ENCODE measurements at regions of chr13 and their contacts with region 1.

Region 1: GRCh38 chr13:73765651-73766384 is 368.4 kb downstream of the KLF12 start:
- DNase-seq: peak; percentile 29 to 91 (median 85)
- ATAC-seq: peak; percentile 92
- H3K4me3 ChIP-seq: peak overlapping the region; percentile 52
- H3K4me3 Mint-ChIP-seq: peak overlapping the region; percentile 77 to 87 (median 85)
- H3K27ac ChIP-seq: peak overlapping the region; percentile 77
- H3K27ac Mint-ChIP-seq: peak overlapping the region; percentile 90 to 100 (median 98)
- H3K4me1 ChIP-seq: peaks cover 37 to 52% of the 10 kb centered on the region in 2 donors
- H3K4me1 Mint-ChIP-seq: peaks cover 37 to 92% (median 89%) of the 10 kb centered on the region in 7 donors
- H3K27me3 ChIP-seq: no peaks in the 10 kb centered on the region
- H3K27me3 Mint-ChIP-seq: no peaks in the 10 kb centered on the region

Region 2: GRCh38 chr13:73074036-73074435 is 691.8 kb before region 1 on chr13:
- CTCF ChIA-PET with region 1: no interaction called
- POLR2A ChIA-PET with region 1: no interaction called
- intact Hi-C with region 1: no loop called
- DNase-seq: no peak
- ATAC-seq: peak; percentile 16
- H3K4me3 ChIP-seq: no peak overlapping the region
- H3K4me3 Mint-ChIP-seq: no peak overlapping the region
- H3K27ac ChIP-seq: no peak overlapping the region
- H3K27ac Mint-ChIP-seq: no peak overlapping the region
- H3K4me1 ChIP-seq: no peaks in the 10 kb centered on the region
- H3K4me1 Mint-ChIP-seq: peaks cover 0 to 15% (median 5%) of the 10 kb centered on the region in 7 donors
- H3K27me3 ChIP-seq: no peaks in the 10 kb centered on the region
- H3K27me3 Mint-ChIP-seq: peaks cover 0 to 3% (median 0%) of the 10 kb centered on the region in 5 donors

Region 3: GRCh38 chr13:73715114-73715910 is 50.5 kb before region 1 on chr13:
- CTCF ChIA-PET with region 1: interaction called, 3 read pairs
- POLR2A ChIA-PET with region 1: interaction called, 5 read pairs
- intact Hi-C with region 1: loop called (anchors 1 to 2 kb)
- DNase-seq: peak in 8 of 9 donors; percentile 53 to 85 (median 77)
- ATAC-seq: peak; percentile 90
- H3K4me3 ChIP-seq: peak overlapping the region; percentile 7
- H3K4me3 Mint-ChIP-seq: peak overlapping the region; percentile 72 to 86 (median 78)
- H3K27ac ChIP-seq: peak overlapping the region; percentile 67
- H3K27ac Mint-ChIP-seq: peak overlapping the region; percentile 87 to 99 (median 97)
- H3K4me1 ChIP-seq: peaks cover 34 to 43% of the 10 kb centered on the region in 2 donors
- H3K4me1 Mint-ChIP-seq: peaks cover 25 to 80% (median 58%) of the 10 kb centered on the region in 7 donors
- H3K27me3 ChIP-seq: no peaks in the 10 kb centered on the region
- H3K27me3 Mint-ChIP-seq: no peaks in the 10 kb centered on the region

Region 4: DNA sequence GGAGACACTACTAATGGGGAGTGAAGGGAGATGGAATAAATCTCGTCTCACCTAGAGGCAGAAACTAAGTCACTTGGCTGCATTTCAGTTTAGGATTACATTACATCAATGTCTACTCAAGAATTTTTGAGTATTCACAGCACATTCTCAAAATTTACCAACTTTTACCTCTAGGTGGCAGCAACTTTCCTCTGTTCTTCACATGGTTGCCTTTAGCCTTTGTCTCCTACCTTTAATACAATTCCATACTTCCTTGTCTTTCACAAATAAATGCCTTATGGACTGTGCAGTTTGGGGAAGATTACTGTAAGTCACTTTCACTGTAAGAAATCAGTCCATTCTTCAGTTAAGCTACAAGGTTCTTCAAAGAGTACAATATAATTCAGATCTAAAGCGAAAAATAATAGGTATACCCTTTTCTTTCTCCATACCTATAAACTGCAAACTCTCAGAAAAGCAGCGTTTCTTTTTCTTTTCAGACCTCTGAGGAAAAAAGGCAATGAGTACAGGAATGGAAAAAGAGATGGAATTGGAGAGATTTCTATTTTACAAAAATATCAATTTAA is 11.0 kb before region 1 on chr13:
- CTCF ChIA-PET with region 1: interaction called, 41 read pairs
- POLR2A ChIA-PET with region 1: interaction called, 43 read pairs
- intact Hi-C with region 1: loop called (anchors 1 kb)
- DNase-seq: peak in 7 of 9 donors; percentile 32 to 69 (median 59)
- ATAC-seq: peak; percentile 67
- H3K4me3 ChIP-seq: no peak overlapping the region
- H3K4me3 Mint-ChIP-seq: peak overlapping the region in 1 of 10 donors; percentile 5
- H3K27ac ChIP-seq: no peak overlapping the region
- H3K27ac Mint-ChIP-seq: peak overlapping the region; percentile 11 to 96 (median 79)
- H3K4me1 ChIP-seq: peaks cover 0 to 19% of the 10 kb centered on the region in 2 donors
- H3K4me1 Mint-ChIP-seq: peaks cover 13 to 76% (median 57%) of the 10 kb centered on the region in 7 donors
- H3K27me3 ChIP-seq: no peaks in the 10 kb centered on the region
- H3K27me3 Mint-ChIP-seq: no peaks in the 10 kb centered on the region

Region 5: GRCh38 chr13:73803997-73804396 is 38.2 kb after region 1 on chr13:
- CTCF ChIA-PET with region 1: no interaction called
- POLR2A ChIA-PET with region 1: interaction called, 8 read pairs
- intact Hi-C with region 1: loop called in 1 of 2 experiments (anchors 5 kb)
- DNase-seq: no peak
- ATAC-seq: no peak
- H3K4me3 ChIP-seq: no peak overlapping the region
- H3K4me3 Mint-ChIP-seq: no peak overlapping the region
- H3K27ac ChIP-seq: no peak overlapping the region
- H3K27ac Mint-ChIP-seq: peak overlapping the region in 5 of 9 donors; percentile 1 to 58 (median 44)
- H3K4me1 ChIP-seq: no peaks in the 10 kb centered on the region
- H3K4me1 Mint-ChIP-seq: peaks cover 0 to 52% (median 29%) of the 10 kb centered on the region in 7 donors
- H3K27me3 ChIP-seq: no peaks in the 10 kb centered on the region
- H3K27me3 Mint-ChIP-seq: no peaks in the 10 kb centered on the region

Region 6: DNA sequence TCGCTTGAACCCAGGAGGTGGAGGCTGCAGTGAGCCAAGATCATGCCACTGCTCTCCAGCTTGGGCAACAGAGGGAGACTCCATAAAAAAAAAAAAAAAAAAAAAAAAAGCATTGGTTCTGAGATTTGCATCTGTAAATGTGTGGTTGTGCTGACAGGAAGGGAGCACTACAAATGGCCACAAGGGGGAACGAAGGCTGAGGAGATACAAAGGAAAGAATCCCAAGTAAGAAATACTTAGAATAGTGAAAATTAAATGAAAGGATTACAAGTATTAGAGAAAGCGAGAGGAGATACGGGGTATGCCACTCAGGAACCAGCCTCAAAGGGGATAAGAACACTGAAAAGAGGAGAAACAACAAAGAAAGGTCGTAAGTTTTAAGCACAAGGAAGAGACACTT is 83.5 kb after region 1 on chr13:
- CTCF ChIA-PET with region 1: interaction called, 13 read pairs
- POLR2A ChIA-PET with region 1: interaction called, 5 read pairs
- intact Hi-C with region 1: no loop called
- DNase-seq: peak in 4 of 9 donors; percentile 8 to 30 (median 21)
- ATAC-seq: no peak
- H3K4me3 ChIP-seq: no peak overlapping the region
- H3K4me3 Mint-ChIP-seq: peak overlapping the region in 4 of 10 donors; percentile 6 to 65 (median 47)
- H3K27ac ChIP-seq: no peak overlapping the region
- H3K27ac Mint-ChIP-seq: peak overlapping the region in 6 of 9 donors; percentile 3 to 86 (median 64)
- H3K4me1 ChIP-seq: peaks cover 10 to 16% of the 10 kb centered on the region in 2 donors
- H3K4me1 Mint-ChIP-seq: peaks cover 6 to 64% (median 51%) of the 10 kb centered on the region in 7 donors
- H3K27me3 ChIP-seq: no peaks in the 10 kb centered on the region
- H3K27me3 Mint-ChIP-seq: no peaks in the 10 kb centered on the region

Region 7: DNA sequence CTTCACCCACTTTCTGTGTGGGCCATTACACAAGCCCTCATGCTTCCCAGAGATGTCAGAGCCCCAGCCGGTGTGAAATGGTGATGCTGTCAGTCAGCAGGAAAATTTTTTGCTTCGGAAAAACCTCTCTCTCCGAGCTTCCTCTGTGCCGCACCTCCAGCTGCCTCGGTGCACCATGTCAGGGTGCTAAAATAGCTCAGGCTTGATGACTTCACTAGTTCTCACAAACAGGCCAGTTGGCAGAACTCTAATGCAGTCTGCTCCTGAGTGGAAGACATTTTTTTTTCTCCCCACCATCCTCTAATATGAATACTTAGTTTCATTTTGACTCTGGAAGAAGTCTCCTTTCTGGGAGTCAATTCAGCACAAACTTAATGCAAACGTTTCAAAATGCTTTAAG is 297.1 kb after region 1 on chr13:
- CTCF ChIA-PET with region 1: no interaction called
- POLR2A ChIA-PET with region 1: no interaction called
- intact Hi-C with region 1: loop called in 1 of 2 experiments (anchors 5 kb)
- DNase-seq: peak in 1 of 9 donors; percentile 24
- ATAC-seq: peak; percentile 5
- H3K4me3 ChIP-seq: no peak overlapping the region
- H3K4me3 Mint-ChIP-seq: peak overlapping the region; percentile 26 to 80 (median 64)
- H3K27ac ChIP-seq: no peak overlapping the region
- H3K27ac Mint-ChIP-seq: peak overlapping the region; percentile 58 to 86 (median 81)
- H3K4me1 ChIP-seq: peaks cover 52 to 73% of the 10 kb centered on the region in 2 donors
- H3K4me1 Mint-ChIP-seq: peaks cover 50 to 95% (median 91%) of the 10 kb centered on the region in 7 donors
- H3K27me3 ChIP-seq: no peaks in the 10 kb centered on the region
- H3K27me3 Mint-ChIP-seq: no peaks in the 10 kb centered on the region

Region 8: GRCh38 chr13:74230984-74231501 is 465.2 kb after region 1 on chr13:
- CTCF ChIA-PET with region 1: no interaction called
- POLR2A ChIA-PET with region 1: interaction called, 4 read pairs
- intact Hi-C with region 1: loop called in 1 of 2 experiments (anchors 5 kb)
- DNase-seq: peak in 7 of 9 donors; percentile 37 to 78 (median 69)
- ATAC-seq: peak; percentile 85
- H3K4me3 ChIP-seq: peak overlapping the region; percentile 61
- H3K4me3 Mint-ChIP-seq: peak overlapping the region; percentile 72 to 87 (median 84)
- H3K27ac ChIP-seq: peak overlapping the region; percentile 70
- H3K27ac Mint-ChIP-seq: peak overlapping the region; percentile 86 to 97 (median 90)
- H3K4me1 ChIP-seq: peaks cover 0 to 29% of the 10 kb centered on the region in 2 donors
- H3K4me1 Mint-ChIP-seq: peaks cover 8 to 62% (median 52%) of the 10 kb centered on the region in 7 donors
- H3K27me3 ChIP-seq: no peaks in the 10 kb centered on the region
- H3K27me3 Mint-ChIP-seq: no peaks in the 10 kb centered on the region